ENCODE measurements at regions of chr2 and their contacts with region 1.

Region 1: GRCh38 chr2:217105733-217106649 is 246.1 kb upstream of the TNP1 start:
- DNase-seq: peak; percentile 81
- H3K4me3 ChIP-seq: no peak overlapping the region
- H3K27ac ChIP-seq: peak overlapping the region; percentile 87
- H3K27me3 ChIP-seq: no peaks in the 10 kb centered on the region
- CTCF ChIP-seq: no peak

Region 2: DNA sequence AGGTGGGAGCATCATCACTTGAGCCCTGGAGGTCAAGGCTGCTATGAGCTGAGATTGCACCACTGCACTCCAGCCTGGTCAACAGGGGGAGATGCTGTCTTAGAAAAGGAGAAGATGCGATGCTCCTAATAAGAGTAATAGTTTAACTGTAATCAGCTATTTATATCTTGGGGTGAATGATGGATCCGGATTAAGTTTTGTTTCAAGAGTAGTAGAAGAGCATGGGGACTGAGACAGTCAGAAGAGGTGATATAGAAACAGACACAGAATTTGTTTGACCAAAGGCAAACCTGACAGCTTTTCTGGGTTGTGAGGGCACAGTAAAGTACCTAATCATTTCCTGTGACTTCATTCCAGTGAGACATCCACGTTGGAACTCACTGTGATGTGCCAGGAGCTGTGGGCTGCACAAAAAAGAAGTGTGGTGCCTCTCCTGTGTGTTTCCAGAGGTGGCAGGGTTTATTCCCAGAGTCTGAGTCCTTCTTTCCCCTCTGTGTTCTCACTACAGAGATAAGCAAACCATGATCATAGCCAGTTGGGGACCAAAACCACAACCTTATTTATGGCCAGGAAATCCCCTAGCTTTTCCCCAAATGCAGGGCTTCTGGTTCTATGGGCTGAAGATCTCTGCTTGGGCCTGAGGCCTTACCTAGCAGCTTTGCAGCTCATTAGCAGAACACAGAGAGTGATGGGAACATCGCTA is 883.2 kb before region 1 on chr2:
- CTCF ChIA-PET with region 1: no interaction called
- POLR2A ChIA-PET with region 1: no interaction called
- DNase-seq: no peak
- H3K4me3 ChIP-seq: no peak overlapping the region
- H3K27ac ChIP-seq: no peak overlapping the region
- H3K27me3 ChIP-seq: no peaks in the 10 kb centered on the region
- CTCF ChIP-seq: peak; percentile 55

Region 3: DNA sequence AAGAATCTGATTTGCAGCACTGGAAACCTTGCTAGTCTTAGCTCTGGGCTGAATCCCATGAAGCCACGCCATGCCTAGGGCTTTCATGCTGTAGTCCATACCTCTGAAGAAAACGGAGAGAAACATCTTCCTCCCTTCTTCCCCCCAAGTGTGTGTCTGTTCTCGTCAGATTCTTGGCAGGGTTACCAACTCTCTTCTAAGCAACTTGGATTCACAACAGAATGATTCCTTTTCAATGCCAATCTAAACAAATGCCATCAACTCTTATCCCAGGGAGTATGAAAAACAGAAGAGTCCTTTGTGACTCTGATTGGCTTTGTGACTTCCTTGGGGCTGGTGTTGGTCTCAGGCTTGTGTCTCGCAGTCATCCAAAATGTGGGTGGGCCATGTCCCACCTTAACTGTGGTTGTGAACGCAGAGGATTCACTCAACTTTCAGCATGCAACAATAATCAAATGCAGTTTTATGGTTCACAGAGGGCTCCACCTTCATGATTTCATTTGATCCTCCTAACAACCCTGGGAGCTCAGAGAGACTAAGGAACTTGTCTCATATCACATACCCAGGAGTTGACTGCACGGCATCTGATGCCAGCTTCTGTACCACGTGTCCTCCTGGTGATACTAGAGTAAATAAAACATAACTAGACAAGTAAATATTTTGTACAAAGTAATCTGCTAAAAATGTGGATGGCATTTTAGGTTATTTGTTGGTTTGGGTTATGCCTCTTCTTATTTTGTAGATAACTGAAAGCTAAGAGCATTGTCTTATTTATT is 60.1 kb before region 1 on chr2:
- CTCF ChIA-PET with region 1: no interaction called
- POLR2A ChIA-PET with region 1: no interaction called
- DNase-seq: no peak
- H3K4me3 ChIP-seq: no peak overlapping the region
- H3K27ac ChIP-seq: no peak overlapping the region
- H3K27me3 ChIP-seq: no peaks in the 10 kb centered on the region
- CTCF ChIP-seq: no peak

Region 4: GRCh38 chr2:217065695-217066405 is 40.1 kb before region 1 on chr2:
- CTCF ChIA-PET with region 1: no interaction called
- POLR2A ChIA-PET with region 1: interaction called, 11 read pairs
- DNase-seq: peak; percentile 97
- H3K4me3 ChIP-seq: no peak overlapping the region
- H3K27ac ChIP-seq: peak overlapping the region; percentile 12
- H3K27me3 ChIP-seq: no peaks in the 10 kb centered on the region
- CTCF ChIP-seq: no peak

Measured in AG04450 (cell line).